Activated CD4-positive, alpha-beta T cell treated with anti-CD3 and anti-CD28 coated beads for 36 hours (primary cell): ENCODE measurements at regions of chr4 and their contacts with region 1.

Region 1: DNA sequence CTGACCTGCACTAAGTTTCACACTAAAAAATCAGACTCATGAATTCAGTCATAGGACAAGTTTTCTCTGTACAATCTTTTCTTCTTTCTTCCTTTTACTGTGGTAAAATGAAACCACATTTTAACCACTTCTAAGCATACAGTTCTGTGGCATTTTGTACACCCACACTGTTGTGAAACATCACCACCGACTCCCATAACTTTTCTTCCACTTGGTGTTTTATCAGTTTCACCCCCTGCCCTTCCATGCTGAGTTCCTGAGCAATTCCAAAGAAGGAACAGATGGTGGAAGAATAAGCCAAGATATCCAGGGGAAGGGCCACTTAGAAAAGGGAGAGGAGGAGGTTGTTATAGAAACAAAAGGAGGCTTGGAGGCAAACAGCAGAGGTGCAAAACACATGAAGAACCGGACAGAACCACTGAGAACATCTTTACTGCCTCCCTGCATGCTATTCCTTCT is 22.6 kb downstream of the SLC25A4 start:
- DNase-seq: peak; percentile 21
- ATAC-seq: peak; percentile 86
- H3K4me3 Mint-ChIP-seq: peak overlapping the region; percentile 6
- H3K27ac Mint-ChIP-seq: no peak overlapping the region
- H3K4me1 Mint-ChIP-seq: peaks cover 22% of the 10 kb centered on the region
- H3K27me3 Mint-ChIP-seq: peaks cover 6% of the 10 kb centered on the region

Region 2: DNA sequence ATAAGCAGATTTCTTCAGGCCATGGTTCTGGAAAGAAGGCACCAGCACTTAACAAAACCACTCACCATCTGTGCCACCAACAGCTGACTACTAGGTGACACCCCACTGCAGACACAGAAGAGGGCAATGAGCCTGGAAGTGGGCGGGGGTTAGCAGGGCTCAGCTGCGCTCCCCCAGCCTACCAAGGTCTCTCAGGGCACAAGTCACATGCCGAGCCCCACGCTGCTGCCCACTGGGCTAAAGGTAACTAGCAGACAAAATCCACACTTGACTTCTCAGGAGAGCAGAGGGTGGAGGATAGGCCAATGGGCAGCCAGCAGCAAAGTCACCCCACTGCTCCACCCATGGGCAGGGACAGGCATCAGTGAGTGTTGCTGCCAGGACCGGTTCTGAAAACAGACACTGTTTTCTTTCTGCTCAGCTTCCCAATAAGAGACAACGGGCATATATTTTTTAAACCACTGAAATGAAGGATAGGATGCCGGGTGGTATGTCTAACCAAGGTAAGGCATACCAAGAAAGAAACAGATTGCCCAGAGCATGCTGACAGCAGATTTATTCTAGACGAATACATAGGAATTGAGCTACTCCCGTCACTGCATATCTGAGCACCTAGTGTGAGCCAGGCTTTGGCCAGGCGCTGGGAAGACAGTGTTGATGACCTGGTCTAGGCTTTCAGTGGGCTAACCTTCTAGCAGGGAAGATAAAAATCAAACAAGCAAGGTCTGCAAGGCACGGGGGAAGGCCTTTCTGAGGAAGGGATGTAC is 360.0 kb before region 1 on chr4:
- CTCF ChIA-PET with region 1: no interaction called
- POLR2A ChIA-PET with region 1: no interaction called
- intact Hi-C with region 1: no loop called
- DNase-seq: no peak
- ATAC-seq: no peak
- H3K4me3 Mint-ChIP-seq: no peak overlapping the region
- H3K27ac Mint-ChIP-seq: no peak overlapping the region
- H3K4me1 Mint-ChIP-seq: peaks cover 10% of the 10 kb centered on the region
- H3K27me3 Mint-ChIP-seq: no peaks in the 10 kb centered on the region

Region 3: DNA sequence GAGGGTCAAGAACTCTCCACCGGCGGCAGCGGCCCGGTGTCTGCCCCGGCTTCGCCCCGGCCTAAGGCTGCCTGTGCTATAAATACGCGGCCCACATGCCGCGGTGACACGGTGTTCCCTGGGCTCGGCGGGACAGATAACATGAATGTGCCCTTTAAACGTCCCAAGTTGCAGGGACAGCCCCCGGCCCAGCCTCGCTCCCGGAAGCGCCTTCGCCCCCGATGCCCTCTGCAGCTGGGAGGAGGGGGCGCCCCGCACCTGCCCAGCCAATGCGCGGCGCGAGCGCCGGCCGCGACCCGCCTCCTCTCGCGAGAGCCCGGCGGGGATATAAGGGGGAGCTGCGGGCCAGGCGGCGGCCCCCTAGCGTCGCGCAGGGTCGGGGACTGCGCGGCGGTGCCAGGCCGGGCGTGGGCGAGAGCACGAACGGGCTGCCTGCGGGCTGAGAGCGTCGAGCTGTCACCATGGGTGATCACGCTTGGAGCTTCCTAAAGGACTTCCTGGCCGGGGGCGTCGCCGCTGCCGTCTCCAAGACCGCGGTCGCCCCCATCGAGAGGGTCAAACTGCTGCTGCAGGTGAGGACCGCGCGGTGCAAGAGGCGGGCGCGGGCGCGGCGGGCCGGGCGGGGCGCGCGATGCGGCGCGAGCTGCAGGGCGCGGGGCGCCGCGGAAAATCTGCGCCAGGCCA is 22.6 kb before region 1 on chr4 and contains the start of gene SLC25A4:
- CTCF ChIA-PET with region 1: interaction called, 3 read pairs
- POLR2A ChIA-PET with region 1: no interaction called
- intact Hi-C with region 1: loop called in 1 of 2 experiments (anchors 1 kb)
- DNase-seq: peak; percentile 91
- ATAC-seq: peak; percentile 95
- H3K4me3 Mint-ChIP-seq: peak within 1 kb of the TSS; percentile 74
- H3K27ac Mint-ChIP-seq: peak within 1 kb of the TSS; percentile 70
- H3K4me1 Mint-ChIP-seq: peaks cover 10% of the 10 kb centered on the region
- H3K27me3 Mint-ChIP-seq: peaks cover 33% of the 10 kb centered on the region
- total RNA-seq, gene SLC25A4: 4.2 to 5.0 TPM